ENCODE measurements at regions of chr16 and their contacts with region 1.

Region 1: GRCh38 chr16:30694926-30695693 is 3.9 kb upstream of the SRCAP start:
- DNase-seq: no peak
- H3K4me3 ChIP-seq: no peak overlapping the region
- H3K27ac ChIP-seq: no peak overlapping the region
- H3K4me1 ChIP-seq: peaks cover 0 to 13% of the 10 kb centered on the region in 2 donors
- H3K27me3 ChIP-seq: no peaks in the 10 kb centered on the region
- CTCF ChIP-seq: no peak
- POLR2A ChIP-seq: no peak

Region 2: DNA sequence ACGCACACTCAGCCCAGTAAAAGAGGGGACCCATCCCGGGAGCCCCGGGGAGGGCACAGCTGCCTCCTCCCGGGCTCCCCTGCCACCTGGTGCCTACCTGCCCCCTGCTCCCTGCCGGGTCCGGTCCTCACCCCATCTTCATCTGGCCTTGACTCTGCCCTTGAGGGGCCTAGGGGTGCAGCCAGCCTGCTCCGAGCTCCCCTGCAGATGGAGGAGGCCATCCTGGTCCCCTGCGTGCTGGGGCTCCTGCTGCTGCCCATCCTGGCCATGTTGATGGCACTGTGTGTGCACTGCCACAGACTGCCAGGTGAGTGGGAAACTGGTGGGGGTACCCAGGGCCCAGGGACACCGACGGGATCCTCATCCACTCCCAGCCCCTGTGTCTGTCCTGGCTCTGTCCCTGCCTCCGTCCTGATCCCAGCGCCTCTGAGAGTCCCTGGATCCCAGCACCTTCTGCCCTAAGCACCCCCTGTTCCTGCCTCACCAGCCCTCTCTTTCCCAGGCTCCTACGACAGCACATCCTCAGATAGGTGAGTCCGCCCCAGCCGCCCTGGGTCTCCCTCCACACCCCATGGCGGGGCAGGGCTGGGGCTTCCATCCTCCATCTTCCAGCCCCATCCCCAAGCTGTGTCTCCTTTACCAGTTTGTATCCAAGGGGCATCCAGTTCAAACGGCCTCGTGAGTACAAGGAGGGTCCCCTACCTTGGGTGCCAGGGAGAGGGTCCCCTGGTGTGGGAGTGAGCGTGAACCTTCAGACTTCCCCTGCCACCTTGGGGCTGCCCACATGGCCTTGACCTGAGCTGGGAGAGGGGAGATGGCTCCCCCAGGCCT is 1709.7 kb before region 1 on chr16:
- intact Hi-C with region 1: no loop called
- DNase-seq: no peak
- H3K4me3 ChIP-seq: peak overlapping the region; percentile 18 to 37 (median 27)
- H3K27ac ChIP-seq: peak overlapping the region in 1 of 2 donors; percentile 12
- H3K4me1 ChIP-seq: no peaks in the 10 kb centered on the region
- H3K27me3 ChIP-seq: no peaks in the 10 kb centered on the region
- CTCF ChIP-seq: no peak
- POLR2A ChIP-seq: no peak

Region 3: DNA sequence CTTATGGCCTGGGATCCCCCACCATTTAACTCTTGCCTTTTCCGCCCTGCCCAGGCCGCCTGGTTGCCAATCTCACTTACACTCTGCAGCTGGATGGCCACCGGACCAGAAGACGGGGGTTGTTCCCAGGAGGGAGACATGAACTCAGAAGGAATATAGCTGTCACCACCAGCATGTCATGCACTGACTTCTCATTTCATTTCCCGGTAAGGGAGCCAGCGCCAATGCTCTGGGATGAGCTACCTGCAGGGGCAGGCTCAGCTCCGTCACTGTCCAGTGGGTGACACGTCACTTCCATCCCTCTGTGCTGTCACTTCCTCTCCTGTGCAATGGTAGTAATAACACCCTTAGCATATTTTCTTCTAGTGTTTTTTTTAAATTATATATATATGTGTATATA is 195.8 kb before region 1 on chr16:
- intact Hi-C with region 1: no loop called
- DNase-seq: peak in 1 of 2 donors; percentile 39
- H3K4me3 ChIP-seq: peak overlapping the region in 1 of 3 donors; percentile 42
- H3K27ac ChIP-seq: peak overlapping the region in 1 of 2 donors; percentile 45
- H3K4me1 ChIP-seq: no peaks in the 10 kb centered on the region
- H3K27me3 ChIP-seq: no peaks in the 10 kb centered on the region
- CTCF ChIP-seq: no peak
- POLR2A ChIP-seq: no peak

Region 4: DNA sequence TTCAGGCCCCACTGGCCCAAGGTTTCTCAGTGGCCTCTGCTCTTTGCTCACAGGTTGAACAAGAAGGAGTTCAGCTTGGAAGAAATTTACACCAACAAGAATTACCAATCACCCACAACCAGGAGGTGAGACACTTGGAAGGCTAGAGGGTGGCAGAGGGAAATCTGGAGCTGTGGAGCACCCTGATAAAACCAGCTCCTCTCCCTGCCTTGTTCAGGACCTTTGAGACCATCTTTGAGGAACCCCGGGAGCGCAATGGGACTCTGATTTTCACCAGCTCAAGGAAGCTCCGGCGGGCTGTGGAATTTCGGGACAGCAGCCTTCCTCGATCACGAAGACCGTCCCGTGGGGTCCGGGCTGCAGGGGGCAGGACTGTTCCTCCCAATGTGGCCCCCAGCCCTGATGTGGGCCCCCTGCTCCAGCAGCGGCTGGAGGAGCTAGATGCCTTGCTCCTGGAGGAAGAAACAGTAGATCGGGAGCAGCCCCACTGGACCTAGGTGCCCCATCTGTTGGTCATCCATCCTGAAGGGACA is 39.2 kb before region 1 on chr16:
- intact Hi-C with region 1: loop called (anchors 1 kb)
- DNase-seq: no peak
- H3K4me3 ChIP-seq: no peak overlapping the region
- H3K27ac ChIP-seq: peak overlapping the region in 1 of 2 donors; percentile 13
- H3K4me1 ChIP-seq: peaks cover under 1 to 8% of the 10 kb centered on the region in 2 donors
- H3K27me3 ChIP-seq: no peaks in the 10 kb centered on the region
- CTCF ChIP-seq: no peak
- POLR2A ChIP-seq: no peak